Breast epithelium (tissue), 4 donors: ENCODE measurements at regions of chr11 and their contacts with region 1.

Region 1: GRCh38 chr11:3854977-3855807 is at the start of gene STIM1:
- DNase-seq: peak; percentile 92 to 93
- H3K4me3 ChIP-seq: peak within 1 kb of the TSS; percentile 72 to 85 (median 82)
- H3K27ac ChIP-seq: peak within 1 kb of the TSS; percentile 92 to 97
- H3K4me1 ChIP-seq: peaks cover 0 to 20% of the 10 kb centered on the region in 2 donors
- H3K27me3 ChIP-seq: no peaks in the 10 kb centered on the region
- CTCF ChIP-seq: peak; percentile 98 to 100 (median 99)
- POLR2A ChIP-seq: peak; percentile 71
- total RNA-seq, gene STIM1: 44.2 to 68.2 (median 47.9) TPM

Region 2: GRCh38 chr11:3786781-3787428 is 68.3 kb before region 1 on chr11:
- intact Hi-C with region 1: no loop called
- DNase-seq: no peak
- H3K4me3 ChIP-seq: no peak overlapping the region
- H3K27ac ChIP-seq: peak overlapping the region; percentile 3 to 71
- H3K4me1 ChIP-seq: peaks cover 0 to 3% of the 10 kb centered on the region in 2 donors
- H3K27me3 ChIP-seq: no peaks in the 10 kb centered on the region
- CTCF ChIP-seq: no peak
- POLR2A ChIP-seq: no peak

Region 3: GRCh38 chr11:4065601-4066377 is 210.6 kb after region 1 on chr11:
- intact Hi-C with region 1: loop called (anchors 5 kb)
- DNase-seq: no peak
- H3K4me3 ChIP-seq: no peak overlapping the region
- H3K27ac ChIP-seq: peak overlapping the region in 1 of 2 donors; percentile 23
- H3K4me1 ChIP-seq: no peaks in the 10 kb centered on the region
- H3K27me3 ChIP-seq: no peaks in the 10 kb centered on the region
- CTCF ChIP-seq: no peak
- POLR2A ChIP-seq: no peak

Region 4: DNA sequence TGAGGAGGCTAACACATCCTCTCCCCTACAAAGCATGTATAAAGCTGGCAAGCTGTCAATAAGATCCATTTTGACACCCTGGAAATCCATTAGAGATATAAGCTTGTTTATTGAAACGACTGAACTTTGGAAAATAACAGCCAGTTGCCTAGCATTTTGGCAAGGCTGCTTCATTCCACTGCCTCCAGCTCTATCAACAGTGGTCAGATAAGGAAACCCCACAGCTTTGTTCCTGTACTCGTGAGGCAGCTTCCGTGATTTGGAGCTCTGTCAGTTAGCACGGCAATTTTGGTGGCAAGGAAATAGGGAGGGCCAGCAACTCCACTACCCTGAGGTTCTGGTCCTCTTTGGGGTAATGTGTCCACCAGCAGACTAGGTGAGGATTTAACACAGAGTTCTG is 995.8 kb after region 1 on chr11:
- intact Hi-C with region 1: no loop called
- DNase-seq: no peak
- H3K4me3 ChIP-seq: no peak overlapping the region
- H3K27ac ChIP-seq: no peak overlapping the region
- H3K4me1 ChIP-seq: no peaks in the 10 kb centered on the region
- H3K27me3 ChIP-seq: peaks cover 0 to 3% of the 10 kb centered on the region in 2 donors
- CTCF ChIP-seq: no peak
- POLR2A ChIP-seq: no peak